Adrenal gland (tissue), 19 donors: ENCODE measurements at regions of chr22 and their contacts with region 1.

Region 1: GRCh38 chr22:35350539-35351503 is 30.1 kb upstream of the HMOX1 start:
- DNase-seq: peak; percentile 94 to 96 (median 96)
- H3K4me3 ChIP-seq: peak overlapping the region in 2 of 4 donors; percentile 27 to 67
- H3K27ac ChIP-seq: peak overlapping the region in 3 of 5 donors; percentile 46 to 77 (median 69)
- H3K4me1 ChIP-seq: peaks cover 14 to 19% of the 10 kb centered on the region in 2 donors
- H3K27me3 ChIP-seq: no peaks in the 10 kb centered on the region
- CTCF ChIP-seq: peak; percentile 79 to 97 (median 94)
- POLR2A ChIP-seq: peak in 1 of 2 donors; percentile 46

Region 2: DNA sequence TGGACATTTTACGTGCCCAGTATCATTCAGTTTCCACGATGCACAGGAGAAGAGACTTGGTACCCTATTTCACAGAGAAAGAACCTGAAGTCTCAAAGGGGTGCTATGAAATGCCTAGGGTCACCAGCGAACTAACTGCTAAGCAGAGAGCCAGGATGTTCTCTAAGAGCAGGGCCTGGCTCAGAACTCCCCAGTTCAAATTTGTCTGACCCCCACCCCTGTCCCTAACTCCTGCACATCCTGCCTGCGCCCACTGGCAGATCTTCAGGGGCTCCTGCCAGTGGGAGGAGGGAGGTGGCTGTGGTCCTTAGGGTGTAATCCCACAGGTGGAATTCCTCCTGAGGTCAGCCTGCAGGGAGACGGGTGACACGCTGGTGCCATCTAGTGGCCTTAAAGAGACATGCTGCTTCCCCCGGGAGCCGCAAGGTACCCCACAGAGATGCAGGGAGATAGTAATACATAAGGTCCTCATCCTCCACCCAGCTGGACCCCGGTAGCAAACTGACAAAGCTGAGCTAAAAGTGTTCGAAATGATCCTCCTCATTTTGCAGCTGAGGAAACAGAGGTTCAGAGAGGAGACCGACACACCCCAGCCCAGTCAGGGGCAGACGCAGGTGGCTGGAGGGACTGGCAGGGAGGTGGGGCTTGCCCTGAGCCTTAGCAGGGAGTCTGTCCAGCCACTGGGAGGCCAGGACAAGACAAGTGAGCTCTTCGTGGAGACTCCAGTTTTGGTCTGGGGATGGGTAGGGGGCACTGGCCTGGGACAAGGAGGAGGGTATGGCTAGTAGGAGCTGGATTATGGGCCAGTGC is 232.2 kb after region 1 on chr22:
- intact Hi-C with region 1: loop called (anchors 5 to 10 kb)
- DNase-seq: peak; percentile 41 to 84 (median 65)
- H3K4me3 ChIP-seq: no peak overlapping the region
- H3K27ac ChIP-seq: no peak overlapping the region
- H3K4me1 ChIP-seq: no peaks in the 10 kb centered on the region
- H3K27me3 ChIP-seq: no peaks in the 10 kb centered on the region
- CTCF ChIP-seq: peak; percentile 81 to 95 (median 90)
- POLR2A ChIP-seq: no peak

Region 3: GRCh38 chr22:35622191-35622913 is 271.5 kb after region 1 on chr22:
- intact Hi-C with region 1: loop called in 1 of 2 experiments (anchors 5 kb)
- DNase-seq: peak; percentile 43 to 67 (median 51)
- H3K4me3 ChIP-seq: no peak overlapping the region
- H3K27ac ChIP-seq: peak overlapping the region in 1 of 5 donors; percentile 22
- H3K4me1 ChIP-seq: peaks cover 0 to 13% of the 10 kb centered on the region in 2 donors
- H3K27me3 ChIP-seq: no peaks in the 10 kb centered on the region
- CTCF ChIP-seq: no peak
- POLR2A ChIP-seq: no peak